Head of caudate nucleus (tissue), 42 donors: ENCODE measurements at regions of chr1 and their contacts with region 1.

Region 1: DNA sequence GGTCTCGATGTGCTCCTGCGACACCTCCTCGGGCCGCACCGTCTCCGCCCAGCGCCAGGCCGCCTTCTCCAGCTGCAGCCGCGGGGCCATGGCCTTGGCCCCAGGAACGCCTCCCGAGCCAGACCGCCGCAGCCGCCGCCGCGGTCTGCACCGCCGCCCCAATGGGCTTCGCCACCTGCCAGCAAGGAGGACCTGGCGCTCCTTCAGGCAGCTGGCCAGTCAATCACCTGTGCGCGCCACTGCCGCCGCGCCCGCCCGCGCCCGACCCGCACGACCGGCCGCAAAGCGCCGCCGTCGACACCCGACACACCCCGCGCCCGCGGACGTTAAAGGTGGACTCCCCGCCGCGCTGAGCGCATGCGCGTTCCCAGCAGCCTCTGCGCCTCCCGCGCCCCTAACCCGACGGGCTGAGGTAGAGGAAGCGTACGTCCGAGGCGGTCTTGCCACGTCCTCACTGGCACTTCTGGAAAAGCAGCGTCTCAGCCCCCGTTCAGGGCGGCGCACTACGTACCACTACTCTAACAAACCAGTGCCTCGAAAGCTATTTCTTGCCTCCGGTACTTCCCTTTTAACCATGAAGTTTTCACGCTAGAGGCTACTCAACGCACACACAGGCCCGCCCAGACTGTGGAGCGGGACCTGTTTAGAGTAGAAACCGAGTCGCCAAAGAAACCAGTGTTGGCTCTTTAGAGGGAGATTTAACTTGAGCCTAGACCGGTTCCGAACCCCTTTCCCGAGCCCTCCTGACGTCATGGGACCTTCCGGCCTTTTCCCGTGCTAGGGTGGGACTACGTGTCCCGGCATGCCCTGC is at the start of gene USP48:
- DNase-seq: peak; percentile 96 to 99 (median 98)

Region 2: DNA sequence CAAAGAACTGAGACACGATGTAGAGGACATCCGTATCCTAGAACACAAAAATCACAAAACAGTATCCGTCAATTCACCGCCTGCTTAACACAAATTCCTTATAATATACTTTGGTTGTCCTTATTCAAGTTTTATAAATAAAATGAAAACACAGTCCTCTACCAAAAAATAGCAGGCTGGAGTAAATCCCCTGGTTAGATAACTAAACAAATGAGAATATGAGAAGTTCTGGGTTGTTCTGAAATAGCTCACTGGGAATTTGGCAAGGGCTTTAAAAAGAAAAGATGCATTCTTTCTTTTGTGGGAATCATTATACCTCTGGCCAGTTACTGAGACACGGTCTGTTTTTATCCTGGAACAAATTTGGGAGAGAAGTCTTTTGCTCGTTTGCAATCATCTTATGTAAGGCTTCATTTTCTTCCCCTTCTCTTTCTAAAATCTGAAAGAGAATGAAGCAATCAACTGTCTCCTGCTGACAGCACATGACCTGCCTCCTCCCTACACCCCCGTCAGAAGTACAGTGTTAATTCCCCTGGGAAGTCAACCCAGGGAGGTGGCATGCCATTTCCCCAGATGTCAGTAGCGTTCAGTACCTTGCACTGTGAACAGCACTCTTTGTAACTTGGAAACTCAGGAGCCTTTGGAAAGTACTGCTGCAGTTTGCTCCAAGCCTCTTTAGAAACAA is 76.8 kb before region 1 on chr1:
- intact Hi-C with region 1: loop called (anchors 5 kb)
- DNase-seq: peak; percentile 30 to 92 (median 74)

Region 3: DNA sequence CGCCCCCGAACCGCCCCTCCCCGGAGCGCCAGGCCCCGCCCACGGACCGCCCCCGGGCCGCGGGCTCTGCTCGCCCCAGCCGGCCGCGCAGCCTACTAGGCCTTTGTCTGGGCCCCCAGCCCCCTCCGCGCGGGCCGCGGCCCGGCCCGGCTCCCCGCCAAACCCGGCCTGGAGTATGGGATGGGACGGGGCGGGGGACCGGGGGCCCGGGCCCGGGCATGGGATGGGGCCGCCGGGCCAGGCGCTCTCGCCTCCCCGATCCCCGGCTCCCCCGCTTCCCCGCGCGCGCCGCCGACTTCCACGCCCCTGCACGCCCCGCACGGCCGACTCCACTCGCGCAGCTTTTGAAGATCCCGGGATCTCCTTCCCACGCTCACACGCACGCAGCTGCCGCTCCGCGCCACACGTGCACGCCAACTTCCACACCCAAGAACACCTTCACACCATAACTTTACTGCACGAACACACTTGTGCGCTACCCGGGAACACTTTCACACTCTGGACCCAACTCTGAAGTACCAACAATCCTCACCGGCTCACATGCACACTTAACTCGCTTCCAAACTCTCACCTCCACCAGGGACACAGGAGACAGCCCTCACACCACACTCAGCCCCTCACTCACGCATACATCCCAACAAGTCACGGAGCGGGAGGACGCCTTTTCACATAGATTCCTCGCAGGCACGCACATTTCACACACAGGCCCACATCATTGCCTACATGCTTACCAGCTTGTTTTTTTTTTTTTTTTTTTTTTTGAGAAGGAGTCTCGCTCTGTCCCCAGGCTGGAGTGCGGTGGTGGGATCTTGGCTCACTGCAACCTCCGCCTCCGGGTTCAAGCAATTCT is 154.5 kb after region 1 on chr1:
- intact Hi-C with region 1: loop called (anchors 5 kb)
- DNase-seq: peak; percentile 66 to 94 (median 88)

Region 4: GRCh38 chr1:22018583-22019559 is 235.8 kb after region 1 on chr1:
- intact Hi-C with region 1: no loop called
- DNase-seq: peak in 17 of 42 donors; percentile 6 to 52 (median 18)